CD8-positive, alpha-beta T cell (primary cell): ENCODE measurements at regions of chr10 and their contacts with region 1.

Region 1: GRCh38 chr10:86936661-86937501 is 20.5 kb downstream of the MMRN2 start:
- DNase-seq: no peak
- ATAC-seq: no peak
- H3K4me3 ChIP-seq: no peak overlapping the region
- H3K4me3 Mint-ChIP-seq: no peak overlapping the region
- H3K27ac ChIP-seq: no peak overlapping the region
- H3K27ac Mint-ChIP-seq: no peak overlapping the region
- H3K4me1 ChIP-seq: no peaks in the 10 kb centered on the region
- H3K4me1 Mint-ChIP-seq: no peaks in the 10 kb centered on the region
- H3K27me3 ChIP-seq: no peaks in the 10 kb centered on the region
- H3K27me3 Mint-ChIP-seq: no peaks in the 10 kb centered on the region
- CTCF ChIP-seq: no peak

Region 2: DNA sequence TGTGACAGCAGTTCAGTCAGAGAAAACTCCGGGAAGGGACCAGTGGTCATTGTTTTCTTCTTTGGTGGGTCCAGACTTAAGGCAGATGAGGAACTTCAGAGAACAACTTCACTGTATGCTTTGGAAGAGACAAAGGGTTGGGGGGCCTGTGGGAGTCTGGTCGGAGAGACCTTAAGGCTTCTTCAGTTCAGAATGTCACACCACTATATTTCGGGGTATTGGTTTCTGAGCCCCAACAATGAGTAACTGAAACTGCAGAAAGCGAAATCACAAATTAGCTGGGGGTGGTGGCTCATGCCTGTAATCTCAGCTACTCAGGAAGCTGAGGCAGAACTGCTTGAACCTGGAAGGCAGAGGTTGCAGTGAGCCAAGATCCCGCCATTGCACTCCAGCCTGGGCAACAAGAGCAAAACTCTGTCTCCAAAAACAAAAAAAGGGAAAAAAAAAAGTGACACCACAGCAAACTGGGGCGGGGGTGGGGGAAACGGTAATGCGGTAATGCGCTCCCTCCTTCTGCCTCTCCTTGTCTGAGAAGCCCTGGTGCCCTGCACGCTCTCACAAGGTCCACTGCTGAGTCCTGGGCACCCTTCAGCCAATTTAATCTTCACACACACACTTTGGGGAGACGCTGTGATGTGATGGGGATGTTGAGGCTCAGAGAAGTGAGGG is 29.2 kb after region 1 on chr10:
- CTCF ChIA-PET with region 1: interaction called, 116 read pairs
- POLR2A ChIA-PET with region 1: no interaction called
- intact Hi-C with region 1: loop called (anchors 1 kb)
- DNase-seq: no peak
- ATAC-seq: no peak
- H3K4me3 ChIP-seq: peak overlapping the region; percentile 9 to 10
- H3K4me3 Mint-ChIP-seq: peak overlapping the region; percentile 64
- H3K27ac ChIP-seq: no peak overlapping the region
- H3K27ac Mint-ChIP-seq: peak overlapping the region; percentile 34
- H3K4me1 ChIP-seq: peaks cover 49% of the 10 kb centered on the region
- H3K4me1 Mint-ChIP-seq: peaks cover 33% of the 10 kb centered on the region
- H3K27me3 ChIP-seq: no peaks in the 10 kb centered on the region
- H3K27me3 Mint-ChIP-seq: no peaks in the 10 kb centered on the region
- CTCF ChIP-seq: no peak

Region 3: GRCh38 chr10:87054373-87055295 is 117.8 kb after region 1 on chr10:
- CTCF ChIA-PET with region 1: no interaction called
- POLR2A ChIA-PET with region 1: no interaction called
- intact Hi-C with region 1: loop called in 1 of 2 experiments (anchors 2 kb)
- DNase-seq: no peak
- ATAC-seq: no peak
- H3K4me3 ChIP-seq: no peak overlapping the region
- H3K4me3 Mint-ChIP-seq: no peak overlapping the region
- H3K27ac ChIP-seq: no peak overlapping the region
- H3K27ac Mint-ChIP-seq: no peak overlapping the region
- H3K4me1 ChIP-seq: no peaks in the 10 kb centered on the region
- H3K4me1 Mint-ChIP-seq: no peaks in the 10 kb centered on the region
- H3K27me3 ChIP-seq: no peaks in the 10 kb centered on the region
- H3K27me3 Mint-ChIP-seq: no peaks in the 10 kb centered on the region
- CTCF ChIP-seq: no peak